CD8-positive, alpha-beta memory T cell (primary cell): ENCODE measurements at regions of chr1 and their contacts with region 1.

Region 1: GRCh38 chr1:9867408-9868243 is 42.4 kb downstream of the CTNNBIP1 start:
- DNase-seq: peak; percentile 72 to 90 (median 81)
- H3K4me3 ChIP-seq: no peak overlapping the region
- H3K4me3 Mint-ChIP-seq: no peak overlapping the region
- H3K27ac ChIP-seq: no peak overlapping the region
- H3K27ac Mint-ChIP-seq: no peak overlapping the region
- H3K4me1 ChIP-seq: no peaks in the 10 kb centered on the region
- H3K4me1 Mint-ChIP-seq: peaks cover 3 to 5% (median 3%) of the 10 kb centered on the region in 3 donors
- H3K27me3 ChIP-seq: no peaks in the 10 kb centered on the region
- H3K27me3 Mint-ChIP-seq: no peaks in the 10 kb centered on the region

Region 2: GRCh38 chr1:9615316-9616063 is 252.1 kb before region 1 on chr1:
- CTCF ChIA-PET with region 1: interaction called, 23 read pairs
- POLR2A ChIA-PET with region 1: no interaction called
- DNase-seq: peak; percentile 22 to 65 (median 33)
- H3K4me3 ChIP-seq: no peak overlapping the region
- H3K4me3 Mint-ChIP-seq: no peak overlapping the region
- H3K27ac ChIP-seq: no peak overlapping the region
- H3K27ac Mint-ChIP-seq: no peak overlapping the region
- H3K4me1 ChIP-seq: no peaks in the 10 kb centered on the region
- H3K4me1 Mint-ChIP-seq: no peaks in the 10 kb centered on the region
- H3K27me3 ChIP-seq: no peaks in the 10 kb centered on the region
- H3K27me3 Mint-ChIP-seq: peaks cover 6% of the 10 kb centered on the region in 2 donors

Region 3: GRCh38 chr1:9724706-9725476 is 142.7 kb before region 1 on chr1:
- CTCF ChIA-PET with region 1: interaction called, 10 read pairs
- POLR2A ChIA-PET with region 1: no interaction called
- DNase-seq: peak; percentile 53 to 78 (median 62)
- H3K4me3 ChIP-seq: no peak overlapping the region
- H3K4me3 Mint-ChIP-seq: peak overlapping the region in 1 of 7 donors; percentile 31
- H3K27ac ChIP-seq: no peak overlapping the region
- H3K27ac Mint-ChIP-seq: peak overlapping the region in 7 of 8 donors; percentile 21 to 90 (median 64)
- H3K4me1 ChIP-seq: peaks cover 88% of the 10 kb centered on the region
- H3K4me1 Mint-ChIP-seq: peaks cover 32 to 68% (median 38%) of the 10 kb centered on the region in 3 donors
- H3K27me3 ChIP-seq: no peaks in the 10 kb centered on the region
- H3K27me3 Mint-ChIP-seq: peaks cover 0 to 5% of the 10 kb centered on the region in 2 donors

Region 4: GRCh38 chr1:9784508-9785133 is 83.0 kb before region 1 on chr1:
- CTCF ChIA-PET with region 1: interaction called, 111 read pairs
- POLR2A ChIA-PET with region 1: interaction called, 10 read pairs
- DNase-seq: peak; percentile 40 to 74 (median 63)
- H3K4me3 ChIP-seq: no peak overlapping the region
- H3K4me3 Mint-ChIP-seq: peak overlapping the region in 1 of 7 donors; percentile 49
- H3K27ac ChIP-seq: no peak overlapping the region
- H3K27ac Mint-ChIP-seq: peak overlapping the region in 3 of 8 donors; percentile 40 to 66 (median 63)
- H3K4me1 ChIP-seq: peaks cover 22% of the 10 kb centered on the region
- H3K4me1 Mint-ChIP-seq: peaks cover 21 to 54% (median 34%) of the 10 kb centered on the region in 3 donors
- H3K27me3 ChIP-seq: no peaks in the 10 kb centered on the region
- H3K27me3 Mint-ChIP-seq: no peaks in the 10 kb centered on the region

Region 5: DNA sequence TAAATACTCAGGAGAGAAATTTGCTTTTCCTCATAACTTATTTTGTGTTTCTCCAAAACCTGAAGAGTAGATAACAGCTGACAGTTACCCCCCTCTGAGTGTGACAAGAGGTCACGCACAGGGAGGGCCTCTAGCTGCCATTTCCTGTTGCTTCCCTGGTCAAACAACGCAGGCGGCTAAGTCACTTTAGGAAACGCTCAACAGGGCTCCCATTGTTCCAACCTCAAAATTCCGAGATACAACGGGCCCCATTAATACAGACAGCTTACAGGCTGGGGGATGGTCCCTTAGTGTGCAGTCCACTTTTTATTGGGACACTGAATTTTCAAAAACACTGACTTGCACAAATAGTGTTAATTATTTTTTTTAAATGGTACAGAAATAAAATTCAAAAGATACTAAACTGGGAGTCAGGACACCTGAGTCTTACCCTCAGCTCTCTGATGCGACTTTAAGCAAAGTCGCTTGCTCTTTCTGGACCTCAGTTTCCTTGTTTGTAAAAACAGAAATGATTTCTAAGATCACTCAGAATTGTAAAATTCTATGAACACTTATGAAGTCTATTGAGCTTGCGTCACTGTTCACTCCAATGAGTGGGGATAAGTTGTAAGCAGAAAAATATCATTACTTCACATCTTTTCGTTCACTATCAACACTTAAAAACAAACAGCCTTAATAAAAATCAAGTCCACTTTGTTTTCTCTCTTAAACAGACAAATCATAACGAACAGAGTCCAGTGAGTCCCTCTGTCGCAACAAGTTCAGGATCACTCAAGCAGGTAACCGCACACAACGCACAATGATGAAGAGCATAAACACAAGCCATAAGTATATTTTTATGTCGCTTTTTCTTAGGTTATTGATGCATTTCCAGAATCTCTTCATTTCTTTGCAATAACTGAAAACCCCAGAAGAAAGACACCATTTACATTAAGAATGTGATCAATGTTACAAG is 62.1 kb after region 1 on chr1:
- CTCF ChIA-PET with region 1: no interaction called
- POLR2A ChIA-PET with region 1: no interaction called
- DNase-seq: no peak
- H3K4me3 ChIP-seq: no peak overlapping the region
- H3K4me3 Mint-ChIP-seq: no peak overlapping the region
- H3K27ac ChIP-seq: peak overlapping the region; percentile 80
- H3K27ac Mint-ChIP-seq: no peak overlapping the region
- H3K4me1 ChIP-seq: no peaks in the 10 kb centered on the region
- H3K4me1 Mint-ChIP-seq: no peaks in the 10 kb centered on the region
- H3K27me3 ChIP-seq: no peaks in the 10 kb centered on the region
- H3K27me3 Mint-ChIP-seq: no peaks in the 10 kb centered on the region